ENCODE measurements at regions of chr1 and their contacts with region 1.

Region 1: GRCh38 chr1:77978969-77979876 is at the start of gene FUBP1:
- DNase-seq: peak; percentile 99 to 100 (median 100)
- H3K4me3 ChIP-seq: peak within 1 kb of the TSS; percentile 68 to 100 (median 95)
- H3K27ac ChIP-seq: peak within 1 kb of the TSS; percentile 99
- H3K4me1 ChIP-seq: peaks cover 8 to 46% (median 29%) of the 10 kb centered on the region in 4 experiments
- H3K27me3 ChIP-seq: no peaks in the 10 kb centered on the region

Region 2: DNA sequence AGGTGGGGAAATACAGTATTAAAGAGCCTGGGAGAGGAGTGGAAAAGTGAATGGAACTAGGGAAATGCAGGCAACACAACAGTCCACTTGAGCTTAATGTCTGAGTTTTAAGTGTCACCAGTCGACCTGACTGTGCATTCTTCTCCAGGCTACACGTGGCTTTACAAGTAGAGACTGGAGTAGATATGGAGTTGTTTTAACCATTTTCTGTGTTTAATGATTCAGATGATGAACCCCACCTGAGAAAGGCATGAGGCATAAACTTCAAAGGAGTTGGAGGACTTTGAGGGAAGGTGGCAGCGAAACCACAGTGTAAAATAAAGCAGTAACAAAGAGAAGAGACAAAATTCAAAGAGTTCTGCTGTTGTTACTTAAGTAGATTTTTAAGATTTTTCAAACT is 12.9 kb before region 1 on chr1:
- CTCF ChIA-PET with region 1: interaction called, 13 read pairs
- POLR2A ChIA-PET with region 1: interaction called, 4 read pairs
- DNase-seq: no peak
- H3K4me3 ChIP-seq: no peak overlapping the region
- H3K27ac ChIP-seq: no peak overlapping the region
- H3K4me1 ChIP-seq: no peaks in the 10 kb centered on the region
- H3K27me3 ChIP-seq: no peaks in the 10 kb centered on the region

Region 3: GRCh38 chr1:77991638-77992037 is 12.4 kb after region 1 on chr1:
- CTCF ChIA-PET with region 1: interaction called, 50 read pairs
- POLR2A ChIA-PET with region 1: no interaction called
- DNase-seq: peak in 1 of 3 donors; percentile 22
- H3K4me3 ChIP-seq: no peak overlapping the region
- H3K27ac ChIP-seq: no peak overlapping the region
- H3K4me1 ChIP-seq: peaks cover 0 to 2% (median 0%) of the 10 kb centered on the region in 4 experiments
- H3K27me3 ChIP-seq: no peaks in the 10 kb centered on the region

Region 4: GRCh38 chr1:78004719-78005447 is 25.7 kb after region 1 on chr1 and contains the start of gene DNAJB4:
- CTCF ChIA-PET with region 1: interaction called, 50 read pairs
- POLR2A ChIA-PET with region 1: interaction called, 54 read pairs
- DNase-seq: peak; percentile 96 to 98 (median 97)
- H3K4me3 ChIP-seq: peak within 1 kb of the TSS in 6 of 7 experiments; percentile 68 to 100 (median 88)
- H3K27ac ChIP-seq: peak within 1 kb of the TSS; percentile 99
- H3K4me1 ChIP-seq: peaks cover 7 to 36% (median 27%) of the 10 kb centered on the region in 4 experiments
- H3K27me3 ChIP-seq: no peaks in the 10 kb centered on the region

Region 5: DNA sequence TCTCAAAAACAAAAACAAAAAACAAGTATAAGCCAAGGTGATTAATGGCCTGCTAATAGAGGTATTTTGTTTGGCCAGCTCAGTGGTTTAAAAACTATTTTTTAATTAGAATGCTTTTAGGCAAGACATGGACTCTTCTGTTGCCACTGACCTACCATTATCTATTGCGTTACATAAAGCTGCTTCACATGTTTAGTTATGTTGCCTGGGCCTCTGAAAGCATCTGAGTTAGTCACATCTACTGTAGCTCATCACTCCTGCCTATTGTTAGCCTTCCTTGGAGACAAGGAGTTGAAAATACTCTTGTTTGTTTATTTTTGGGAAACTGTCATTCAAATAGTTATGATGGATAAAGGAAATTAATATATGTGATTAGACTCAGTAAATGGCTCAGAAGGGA is 39.8 kb after region 1 on chr1:
- CTCF ChIA-PET with region 1: no interaction called
- POLR2A ChIA-PET with region 1: no interaction called
- DNase-seq: no peak
- H3K4me3 ChIP-seq: no peak overlapping the region
- H3K27ac ChIP-seq: no peak overlapping the region
- H3K4me1 ChIP-seq: no peaks in the 10 kb centered on the region
- H3K27me3 ChIP-seq: no peaks in the 10 kb centered on the region

Measured in common myeloid progenitor, CD34-positive (primary cell).